B cell (primary cell): ENCODE measurements at regions of chr11 and their contacts with region 1.

Region 1: DNA sequence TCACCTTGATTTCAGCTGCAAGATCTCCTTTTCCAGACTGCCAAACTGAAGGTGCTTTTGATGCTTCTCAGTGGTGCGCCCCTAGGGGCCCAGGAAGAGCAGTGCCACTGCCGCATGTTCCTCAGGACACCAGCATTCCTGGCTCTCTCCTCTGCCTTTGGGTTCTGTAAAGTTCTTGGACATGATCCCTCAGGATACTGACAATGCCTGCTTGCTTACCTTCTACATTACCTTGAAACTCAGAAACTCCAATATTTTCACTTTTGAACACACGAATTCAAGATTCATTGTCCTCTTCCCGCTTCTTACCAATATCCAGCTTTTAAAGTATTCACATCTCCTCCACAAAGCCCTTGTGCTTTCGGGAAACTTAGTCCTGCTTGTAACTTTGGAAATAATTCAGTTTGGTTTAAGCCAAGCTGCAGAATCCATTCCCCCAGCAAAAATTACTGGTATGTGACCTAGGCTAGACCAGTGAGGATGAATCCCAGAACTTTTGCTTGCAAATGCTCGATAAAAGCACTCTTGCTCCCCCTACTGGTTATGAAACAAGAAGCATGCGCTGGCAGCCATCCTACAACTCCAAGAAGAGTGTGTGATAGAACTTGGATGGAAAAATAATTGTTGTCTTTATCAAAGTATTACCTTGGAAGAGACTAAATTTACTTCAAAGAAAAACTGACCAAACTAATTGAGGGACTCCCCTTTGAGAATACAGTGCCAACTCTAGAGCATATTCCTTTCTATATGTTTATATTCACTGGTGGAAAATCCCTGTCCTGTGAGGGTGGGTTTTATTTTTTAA is 16.5 kb upstream of the OR5B21 start:
- DNase-seq: peak; percentile 79
- ATAC-seq: peak; percentile 31
- H3K4me3 ChIP-seq: peak overlapping the region; percentile 22 to 70 (median 45)
- H3K4me3 Mint-ChIP-seq: peak overlapping the region; percentile 84
- H3K27ac ChIP-seq: peak overlapping the region; percentile 81 to 99
- H3K27ac Mint-ChIP-seq: peak overlapping the region; percentile 93
- H3K4me1 ChIP-seq: peaks cover 28 to 32% of the 10 kb centered on the region in 2 donors
- H3K4me1 Mint-ChIP-seq: peaks cover 29% of the 10 kb centered on the region
- H3K27me3 ChIP-seq: no peaks in the 10 kb centered on the region
- H3K27me3 Mint-ChIP-seq: no peaks in the 10 kb centered on the region
- CTCF ChIP-seq: peak; percentile 86

Region 2: GRCh38 chr11:57772562-57772961 is 751.9 kb before region 1 on chr11:
- CTCF ChIA-PET with region 1: no interaction called
- POLR2A ChIA-PET with region 1: no interaction called
- intact Hi-C with region 1: no loop called
- DNase-seq: no peak
- ATAC-seq: no peak
- H3K4me3 ChIP-seq: no peak overlapping the region
- H3K4me3 Mint-ChIP-seq: no peak overlapping the region
- H3K27ac ChIP-seq: no peak overlapping the region
- H3K27ac Mint-ChIP-seq: no peak overlapping the region
- H3K4me1 ChIP-seq: peaks cover 4 to 13% of the 10 kb centered on the region in 2 donors
- H3K4me1 Mint-ChIP-seq: peaks cover 24% of the 10 kb centered on the region
- H3K27me3 ChIP-seq: no peaks in the 10 kb centered on the region
- H3K27me3 Mint-ChIP-seq: no peaks in the 10 kb centered on the region
- CTCF ChIP-seq: no peak

Region 3: DNA sequence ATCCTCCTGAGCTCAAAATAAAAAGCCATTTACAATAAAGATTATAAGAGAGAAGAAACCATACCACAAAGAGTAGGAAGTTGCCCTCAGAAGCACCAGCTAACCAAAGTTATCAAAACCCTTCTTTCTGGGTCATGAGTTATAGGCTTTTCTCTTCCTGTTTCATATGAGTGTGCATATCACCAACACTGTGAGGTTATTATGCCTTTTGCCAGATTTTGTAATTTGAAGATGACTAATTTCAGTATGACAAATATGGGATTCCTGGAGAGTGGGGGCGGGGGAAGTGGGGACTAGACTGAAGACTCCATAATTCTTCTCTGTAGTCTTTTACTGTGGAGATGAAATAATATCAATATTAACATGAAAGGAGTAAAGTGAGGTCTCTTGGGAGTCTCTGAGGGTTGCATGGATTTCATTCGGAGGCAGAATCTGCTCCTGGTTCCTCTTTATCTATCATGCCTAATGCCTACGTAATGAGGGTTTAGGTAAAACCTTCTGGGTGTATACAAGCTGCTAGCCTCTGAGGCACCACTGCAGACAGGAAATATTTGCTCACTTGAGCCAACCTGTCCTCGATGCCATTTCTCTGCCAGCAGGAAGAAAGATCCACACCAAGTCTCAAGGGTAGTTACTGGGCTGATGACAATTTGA is 49.1 kb after region 1 on chr11:
- CTCF ChIA-PET with region 1: interaction called, 20 read pairs
- POLR2A ChIA-PET with region 1: no interaction called
- intact Hi-C with region 1: loop called (anchors 2 kb)
- DNase-seq: peak; percentile 85
- ATAC-seq: peak; percentile 19
- H3K4me3 ChIP-seq: peak overlapping the region; percentile 48 to 100 (median 61)
- H3K4me3 Mint-ChIP-seq: peak overlapping the region; percentile 97
- H3K27ac ChIP-seq: peak overlapping the region; percentile 100
- H3K27ac Mint-ChIP-seq: peak overlapping the region; percentile 100
- H3K4me1 ChIP-seq: peaks cover 46 to 47% of the 10 kb centered on the region in 2 donors
- H3K4me1 Mint-ChIP-seq: peaks cover 60% of the 10 kb centered on the region
- H3K27me3 ChIP-seq: no peaks in the 10 kb centered on the region
- H3K27me3 Mint-ChIP-seq: no peaks in the 10 kb centered on the region
- CTCF ChIP-seq: no peak